ENCODE measurements at regions of chr13 and their contacts with region 1.

Region 1: DNA sequence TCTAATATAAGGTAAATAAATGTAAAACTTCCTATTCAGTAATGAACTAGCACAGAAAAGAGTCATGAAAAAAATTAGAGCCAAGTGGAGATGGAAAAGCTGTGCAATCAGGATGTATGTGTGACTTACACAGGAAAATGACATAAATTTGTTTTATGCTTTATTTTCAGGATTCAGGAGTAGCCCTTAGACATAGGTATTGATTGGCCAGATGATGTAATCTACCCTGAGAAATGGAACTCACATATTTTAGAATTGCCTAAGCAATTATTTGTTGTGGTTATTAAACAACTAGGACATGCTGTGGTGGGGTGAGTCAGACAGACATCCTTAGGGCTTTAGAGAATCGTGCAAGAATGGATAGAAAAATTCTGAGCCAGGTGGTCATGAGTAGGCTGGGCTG is 110.7 kb downstream of the PCDH9 start:
- DNase-seq: peak; percentile 85
- H3K4me3 Mint-ChIP-seq: peak overlapping the region; percentile 18
- H3K27ac Mint-ChIP-seq: peak overlapping the region; percentile 91
- H3K4me1 Mint-ChIP-seq: peaks cover 37% of the 10 kb centered on the region
- H3K27me3 Mint-ChIP-seq: no peaks in the 10 kb centered on the region
- CTCF ChIP-seq: no peak

Region 2: GRCh38 chr13:67107979-67108378 is 11.5 kb before region 1 on chr13:
- CTCF ChIA-PET with region 1: interaction called, 3 read pairs
- POLR2A ChIA-PET with region 1: interaction called, 13 read pairs
- intact Hi-C with region 1: no loop called
- DNase-seq: no peak
- H3K4me3 Mint-ChIP-seq: no peak overlapping the region
- H3K27ac Mint-ChIP-seq: no peak overlapping the region
- H3K4me1 Mint-ChIP-seq: peaks cover 9% of the 10 kb centered on the region
- H3K27me3 Mint-ChIP-seq: no peaks in the 10 kb centered on the region
- CTCF ChIP-seq: no peak

Region 3: GRCh38 chr13:67139551-67139950 is 20.1 kb after region 1 on chr13:
- CTCF ChIA-PET with region 1: no interaction called
- POLR2A ChIA-PET with region 1: no interaction called
- intact Hi-C with region 1: no loop called
- DNase-seq: no peak
- H3K4me3 Mint-ChIP-seq: no peak overlapping the region
- H3K27ac Mint-ChIP-seq: no peak overlapping the region
- H3K4me1 Mint-ChIP-seq: peaks cover 14% of the 10 kb centered on the region
- H3K27me3 Mint-ChIP-seq: no peaks in the 10 kb centered on the region
- CTCF ChIP-seq: no peak